HCT116 (cell line): ENCODE measurements at regions of chr4 and their contacts with region 1.

Region 1: DNA sequence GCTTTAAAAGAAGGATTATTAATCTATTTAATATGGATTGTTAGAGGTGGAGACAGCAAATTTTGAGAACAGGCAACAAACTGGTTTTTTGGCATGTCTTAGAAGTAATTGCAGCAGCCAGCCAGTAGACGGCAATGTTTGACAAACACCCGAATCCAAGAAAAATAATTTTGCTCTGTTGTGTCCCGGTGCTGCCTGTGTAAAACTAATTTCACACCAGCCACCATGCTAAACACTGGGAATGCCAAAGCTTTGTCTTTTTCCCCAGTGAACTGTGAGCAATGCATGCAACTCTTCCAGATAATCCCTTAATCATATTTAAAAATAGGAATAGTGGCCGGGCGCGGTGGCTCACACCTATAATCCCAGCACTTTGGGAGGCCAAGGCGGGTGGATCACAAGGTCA is 25.9 kb downstream of the SMIM31 start:
- DNase-seq: peak; percentile 41
- ATAC-seq: peak; percentile 72
- H3K4me3 ChIP-seq: no peak overlapping the region
- H3K27ac ChIP-seq: no peak overlapping the region
- H3K4me1 ChIP-seq: no peaks in the 10 kb centered on the region
- H3K27me3 ChIP-seq: no peaks in the 10 kb centered on the region
- CTCF ChIP-seq: peak; percentile 75 to 85 (median 79)
- POLR2A ChIP-seq: no peak
- RAD21 ChIP-seq: peak; percentile 83

Region 2: DNA sequence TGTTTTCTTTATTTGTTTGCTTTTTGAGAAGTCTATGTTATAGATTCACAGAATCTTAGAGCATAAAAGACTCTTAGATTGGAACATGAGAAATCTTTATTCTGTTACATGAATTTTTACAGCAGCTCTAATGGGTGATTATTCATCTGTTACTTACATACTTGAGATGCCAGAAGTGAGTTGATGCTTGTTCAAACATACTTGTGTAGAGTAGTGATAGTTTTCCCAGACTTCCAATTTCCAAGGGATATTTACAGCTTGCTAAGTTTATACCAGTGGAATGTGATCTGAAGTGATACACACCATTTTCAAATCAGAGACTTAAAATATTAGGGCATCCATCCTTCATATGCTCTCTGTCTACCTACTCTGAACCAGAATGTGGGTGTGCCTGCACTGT is 278.7 kb before region 1 on chr4:
- CTCF ChIA-PET with region 1: no interaction called
- POLR2A ChIA-PET with region 1: no interaction called
- RAD21 ChIA-PET with region 1: no interaction called
- intact Hi-C with region 1: no loop called
- DNase-seq: no peak
- ATAC-seq: no peak
- H3K4me3 ChIP-seq: no peak overlapping the region
- H3K27ac ChIP-seq: no peak overlapping the region
- H3K4me1 ChIP-seq: no peaks in the 10 kb centered on the region
- H3K27me3 ChIP-seq: no peaks in the 10 kb centered on the region
- CTCF ChIP-seq: no peak
- POLR2A ChIP-seq: no peak
- RAD21 ChIP-seq: no peak

Region 3: DNA sequence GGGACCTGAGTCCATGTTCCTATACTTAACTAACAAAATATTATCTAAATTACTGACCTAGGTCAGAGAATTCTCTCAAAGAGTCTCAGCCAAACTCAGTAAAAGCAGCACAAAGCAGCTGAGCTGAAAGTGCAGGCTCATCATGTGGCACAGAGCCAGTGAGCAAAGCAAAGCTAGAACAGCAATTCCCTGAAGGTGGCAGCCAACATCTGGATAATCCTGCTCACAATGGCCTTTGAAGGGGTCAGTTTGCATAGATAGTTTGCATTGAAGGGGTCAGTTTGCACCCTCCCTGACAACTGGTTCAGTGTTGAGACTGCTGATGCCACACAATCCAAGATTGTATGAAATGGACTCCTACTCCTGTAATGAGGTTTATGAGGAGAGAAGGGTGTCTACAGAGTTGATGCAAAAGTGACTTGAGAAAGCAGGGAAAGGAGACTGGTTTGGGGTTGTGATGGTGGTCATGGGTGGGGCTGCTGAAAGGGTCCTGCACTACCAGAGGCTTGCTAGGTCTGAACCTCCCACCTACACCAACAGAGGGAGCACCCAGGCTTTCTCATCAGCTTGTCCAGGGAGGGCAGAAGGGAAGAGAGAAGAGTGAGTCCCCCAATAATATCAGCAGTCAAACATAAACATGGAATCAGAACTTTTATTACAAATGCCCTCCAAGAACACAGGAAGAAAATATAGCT is 157.9 kb after region 1 on chr4:
- CTCF ChIA-PET with region 1: interaction called, 4 read pairs
- POLR2A ChIA-PET with region 1: no interaction called
- RAD21 ChIA-PET with region 1: no interaction called
- intact Hi-C with region 1: loop called (anchors 5 kb)
- DNase-seq: no peak
- ATAC-seq: peak; percentile 80
- H3K4me3 ChIP-seq: no peak overlapping the region
- H3K27ac ChIP-seq: no peak overlapping the region
- H3K4me1 ChIP-seq: no peaks in the 10 kb centered on the region
- H3K27me3 ChIP-seq: no peaks in the 10 kb centered on the region
- CTCF ChIP-seq: peak in 2 of 3 experiments; percentile 47 to 48; a peak in 4 of 6 replicates
- POLR2A ChIP-seq: no peak
- RAD21 ChIP-seq: no peak

Region 4: DNA sequence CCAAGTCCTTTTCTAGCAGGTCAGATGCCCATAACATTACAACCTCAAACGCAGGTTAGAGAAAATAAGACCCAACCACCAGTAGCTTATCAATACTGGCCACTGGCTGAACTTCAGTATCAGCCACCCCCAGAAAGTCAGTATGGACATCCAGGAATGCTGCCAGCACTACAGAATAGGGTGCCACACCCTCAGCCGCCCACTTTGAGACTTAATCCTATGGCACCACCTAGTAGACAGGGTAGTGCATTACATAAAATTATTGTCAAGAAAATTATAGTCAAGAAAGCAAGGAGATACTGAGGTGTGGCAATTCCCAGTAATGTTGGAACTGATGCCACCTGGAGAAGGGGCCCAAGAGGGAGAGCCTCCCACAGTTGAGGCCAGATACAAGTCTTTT is 217.5 kb after region 1 on chr4:
- CTCF ChIA-PET with region 1: no interaction called
- POLR2A ChIA-PET with region 1: no interaction called
- RAD21 ChIA-PET with region 1: no interaction called
- intact Hi-C with region 1: loop called (anchors 1 kb)
- DNase-seq: peak; percentile 40
- ATAC-seq: peak; percentile 91
- H3K4me3 ChIP-seq: no peak overlapping the region
- H3K27ac ChIP-seq: no peak overlapping the region
- H3K4me1 ChIP-seq: no peaks in the 10 kb centered on the region
- H3K27me3 ChIP-seq: no peaks in the 10 kb centered on the region
- CTCF ChIP-seq: peak; percentile 23 to 59 (median 59); a peak in 4 of 6 replicates
- POLR2A ChIP-seq: no peak
- RAD21 ChIP-seq: peak; percentile 81

Region 5: DNA sequence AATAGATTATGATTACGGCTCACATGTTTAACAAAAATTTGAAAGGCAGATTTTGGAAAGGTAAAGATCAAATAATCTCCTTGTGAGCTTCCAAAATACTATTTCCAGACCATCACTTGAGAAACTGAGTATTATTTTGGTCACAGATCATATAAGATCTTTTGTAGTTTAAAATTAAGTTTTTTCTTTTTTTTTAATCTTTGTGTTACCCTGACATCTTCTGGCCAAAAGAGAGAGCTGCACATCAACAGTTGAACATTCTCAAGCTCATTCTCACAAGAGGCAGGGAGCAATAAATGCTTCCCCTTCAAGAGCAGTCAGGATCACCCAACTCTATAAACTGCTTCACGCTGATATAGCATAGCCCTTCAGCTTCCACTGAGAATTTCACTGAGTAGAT is 317.0 kb after region 1 on chr4:
- CTCF ChIA-PET with region 1: interaction called, 7 read pairs
- POLR2A ChIA-PET with region 1: no interaction called
- RAD21 ChIA-PET with region 1: no interaction called
- intact Hi-C with region 1: loop called (anchors 1 kb)
- DNase-seq: no peak
- ATAC-seq: peak; percentile 63; the same call in 1 of the 2 replicates
- H3K4me3 ChIP-seq: no peak overlapping the region
- H3K27ac ChIP-seq: no peak overlapping the region
- H3K4me1 ChIP-seq: no peaks in the 10 kb centered on the region
- H3K27me3 ChIP-seq: no peaks in the 10 kb centered on the region
- CTCF ChIP-seq: peak; percentile 22 to 58 (median 54); a peak in 5 of 6 replicates
- POLR2A ChIP-seq: no peak
- RAD21 ChIP-seq: peak; percentile 61